ENCODE measurements at regions of chr14 and their contacts with region 1.

Region 1: GRCh38 chr14:103500148-103500990 is 22.3 kb downstream of the CKB start:
- DNase-seq: peak; percentile 83
- H3K4me3 ChIP-seq: no peak overlapping the region
- H3K27ac ChIP-seq: no peak overlapping the region
- H3K4me1 ChIP-seq: no peaks in the 10 kb centered on the region
- H3K27me3 ChIP-seq: no peaks in the 10 kb centered on the region
- CTCF ChIP-seq: peak; percentile 93 to 98
- POLR2A ChIP-seq: no peak

Region 2: DNA sequence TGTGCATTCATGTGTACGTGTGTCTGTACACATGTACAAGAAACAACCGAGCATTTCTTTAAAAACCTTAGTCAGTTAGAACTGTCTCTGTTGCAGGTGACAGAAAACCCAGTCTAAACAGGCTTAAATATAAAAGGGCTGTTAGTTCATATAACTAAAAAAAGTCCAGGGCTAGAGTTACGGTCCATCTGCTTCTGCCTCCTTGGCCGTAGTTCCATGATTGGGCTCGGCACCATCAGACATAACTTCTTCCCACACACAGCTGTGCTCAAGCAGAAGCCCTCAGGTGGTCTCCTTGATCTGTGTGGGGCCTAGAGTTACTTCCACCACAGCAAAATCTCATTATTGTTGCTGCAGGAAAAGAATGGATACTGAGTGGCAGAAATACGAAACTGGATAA is 12.3 kb before region 1 on chr14:
- CTCF ChIA-PET with region 1: interaction called, 16 read pairs
- POLR2A ChIA-PET with region 1: no interaction called
- dilution Hi-C with region 1: no loop called
- intact Hi-C with region 1: no loop called
- DNase-seq: no peak
- H3K4me3 ChIP-seq: no peak overlapping the region
- H3K27ac ChIP-seq: no peak overlapping the region
- H3K4me1 ChIP-seq: peaks cover 8% of the 10 kb centered on the region
- H3K27me3 ChIP-seq: no peaks in the 10 kb centered on the region
- CTCF ChIP-seq: no peak
- POLR2A ChIP-seq: no peak

Region 3: DNA sequence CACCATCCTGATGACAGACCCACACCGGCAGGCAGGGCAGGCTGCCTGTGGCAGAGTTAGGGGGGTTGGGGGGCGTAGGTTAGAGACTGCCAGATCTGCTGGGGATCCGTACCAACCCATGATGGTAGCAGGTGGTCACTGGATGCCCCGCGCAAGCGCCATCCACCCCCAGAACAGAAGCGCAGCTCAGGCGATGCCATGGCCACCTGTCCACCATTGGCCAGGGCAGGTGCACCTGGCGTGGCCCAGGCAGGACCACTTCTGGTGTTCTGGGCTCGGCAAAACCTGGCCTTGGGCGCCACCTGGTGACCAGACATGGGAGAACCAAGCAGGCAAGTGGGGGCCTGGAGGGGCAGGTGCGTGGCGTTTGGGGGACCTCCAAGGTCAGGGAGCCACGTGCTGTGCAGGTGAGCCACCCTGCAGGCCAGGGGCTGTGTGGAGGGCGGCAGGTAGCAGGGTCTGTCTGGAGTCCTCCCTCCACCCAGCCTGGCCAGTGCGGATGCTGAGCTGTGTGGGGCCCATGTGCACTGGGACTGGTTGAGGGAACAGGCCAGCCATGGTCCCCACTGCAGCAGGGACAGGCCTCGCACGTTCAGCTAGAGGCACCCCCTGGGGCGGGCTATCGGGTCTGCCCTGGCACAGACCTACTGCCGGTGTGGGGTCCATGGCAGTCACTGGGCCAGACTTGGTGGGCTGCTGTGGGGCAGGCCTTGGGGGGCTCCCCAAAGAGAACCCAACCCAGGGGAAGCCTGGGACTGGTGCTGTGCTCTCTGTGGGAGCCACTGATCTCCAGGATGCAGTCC is 46.5 kb after region 1 on chr14:
- CTCF ChIA-PET with region 1: interaction called, 34 read pairs
- POLR2A ChIA-PET with region 1: no interaction called
- dilution Hi-C with region 1: no loop called
- intact Hi-C with region 1: loop called (anchors 1 kb)
- DNase-seq: peak; percentile 40
- H3K4me3 ChIP-seq: no peak overlapping the region
- H3K27ac ChIP-seq: no peak overlapping the region
- H3K4me1 ChIP-seq: no peaks in the 10 kb centered on the region
- H3K27me3 ChIP-seq: no peaks in the 10 kb centered on the region
- CTCF ChIP-seq: peak; percentile 82 to 88
- POLR2A ChIP-seq: no peak